CD4-positive, alpha-beta memory T cell (primary cell): ENCODE measurements at regions of chr12 and their contacts with region 1.

Region 1: DNA sequence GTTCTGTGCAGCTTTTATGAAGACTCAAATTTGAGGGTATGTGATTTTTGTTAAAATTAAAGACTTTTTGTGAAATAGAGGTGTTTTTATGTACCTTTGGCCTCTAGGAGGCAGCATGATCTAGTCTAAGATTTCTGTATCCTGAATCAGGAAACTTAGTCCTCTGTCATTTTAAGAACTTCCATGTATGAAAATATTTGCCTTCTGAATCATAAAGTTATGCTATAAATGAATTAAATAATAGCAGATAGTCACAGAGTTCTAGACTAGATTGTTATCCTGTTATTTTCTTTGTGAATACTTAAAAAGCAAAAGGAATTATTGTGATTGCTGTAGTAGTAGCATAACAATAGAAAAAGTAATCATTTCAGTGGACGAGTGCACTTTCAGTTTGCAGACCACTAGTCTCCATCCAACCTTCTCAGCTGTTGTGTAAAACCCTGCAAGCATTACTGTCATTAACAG is 56.3 kb downstream of the FGD4 start:
- DNase-seq: peak in 4 of 5 donors; percentile 17 to 29 (median 28)
- H3K4me3 ChIP-seq: no peak overlapping the region
- H3K4me3 Mint-ChIP-seq: peak overlapping the region in 6 of 8 donors; percentile 15 to 49 (median 25)
- H3K27ac ChIP-seq: no peak overlapping the region
- H3K27ac Mint-ChIP-seq: no peak overlapping the region
- H3K4me1 ChIP-seq: no peaks in the 10 kb centered on the region
- H3K4me1 Mint-ChIP-seq: peaks cover 0 to 5% (median 2%) of the 10 kb centered on the region in 4 donors
- H3K27me3 ChIP-seq: no peaks in the 10 kb centered on the region
- H3K27me3 Mint-ChIP-seq: peaks cover 0 to 4% of the 10 kb centered on the region in 2 donors

Region 2: GRCh38 chr12:34218165-34219045 is 1762.8 kb after region 1 on chr12:
- CTCF ChIA-PET with region 1: no interaction called
- POLR2A ChIA-PET with region 1: no interaction called
- intact Hi-C with region 1: loop called (anchors 5 kb)
- DNase-seq: peak in 4 of 5 donors; percentile 56 to 66 (median 63)
- H3K4me3 ChIP-seq: no peak overlapping the region
- H3K4me3 Mint-ChIP-seq: peak overlapping the region; percentile 83 to 97 (median 88)
- H3K27ac ChIP-seq: no peak overlapping the region
- H3K27ac Mint-ChIP-seq: peak overlapping the region in 5 of 7 donors; percentile 52 to 75 (median 59)
- H3K4me1 ChIP-seq: no peaks in the 10 kb centered on the region
- H3K4me1 Mint-ChIP-seq: peaks cover 9 to 17% (median 11%) of the 10 kb centered on the region in 4 donors
- H3K27me3 ChIP-seq: no peaks in the 10 kb centered on the region
- H3K27me3 Mint-ChIP-seq: peaks cover 7 to 9% of the 10 kb centered on the region in 2 donors